Transverse colon (tissue), 4 donors: ENCODE measurements at regions of chr19 and their contacts with region 1.

Region 1: GRCh38 chr19:39187559-39187957 is 9.2 kb upstream of the NCCRP1 start:
- DNase-seq: no peak
- H3K4me3 ChIP-seq: no peak overlapping the region
- H3K27ac ChIP-seq: no peak overlapping the region
- H3K4me1 ChIP-seq: no peaks in the 10 kb centered on the region
- H3K27me3 ChIP-seq: peaks cover 26% of the 10 kb centered on the region
- CTCF ChIP-seq: peak in 1 of 5 experiments; percentile 21
- EP300 ChIP-seq: no peak
- POLR2A ChIP-seq: no peak

Region 2: GRCh38 chr19:39110263-39110967 is 77.1 kb before region 1 on chr19:
- in situ Hi-C with region 1: loop called in 2 of 4 experiments (anchors 10 kb)
- intact Hi-C with region 1: no loop called
- DNase-seq: peak; percentile 73
- H3K4me3 ChIP-seq: no peak overlapping the region
- H3K27ac ChIP-seq: no peak overlapping the region
- H3K4me1 ChIP-seq: no peaks in the 10 kb centered on the region
- H3K27me3 ChIP-seq: peaks cover 37% of the 10 kb centered on the region
- CTCF ChIP-seq: peak; percentile 73 to 78 (median 76)
- EP300 ChIP-seq: no peak
- POLR2A ChIP-seq: no peak

Region 3: GRCh38 chr19:39532233-39533002 is 344.9 kb after region 1 on chr19 and contains the start of gene EID2B:
- in situ Hi-C with region 1: no loop called
- intact Hi-C with region 1: no loop called
- DNase-seq: peak; percentile 95
- H3K4me3 ChIP-seq: peak within 1 kb of the TSS; percentile 48 to 75 (median 62)
- H3K27ac ChIP-seq: peak within 1 kb of the TSS; percentile 76 to 91 (median 84)
- H3K4me1 ChIP-seq: peaks cover 0 to 24% (median 4%) of the 10 kb centered on the region in 4 donors
- H3K27me3 ChIP-seq: no peaks in the 10 kb centered on the region
- CTCF ChIP-seq: peak; percentile 94 to 99 (median 98)
- EP300 ChIP-seq: no peak
- POLR2A ChIP-seq: peak; percentile 55
- total RNA-seq, gene EID2B: 1.00 to 1.5 (median 1.3) TPM

Region 4: GRCh38 chr19:39671738-39672363 is 484.3 kb after region 1 on chr19:
- in situ Hi-C with region 1: no loop called
- intact Hi-C with region 1: no loop called
- DNase-seq: no peak
- H3K4me3 ChIP-seq: no peak overlapping the region
- H3K27ac ChIP-seq: no peak overlapping the region
- H3K4me1 ChIP-seq: no peaks in the 10 kb centered on the region
- H3K27me3 ChIP-seq: peaks cover 14% of the 10 kb centered on the region
- CTCF ChIP-seq: peak; percentile 24 to 54 (median 49)
- EP300 ChIP-seq: no peak
- POLR2A ChIP-seq: no peak